Cardiac septum (tissue), 1 donor: ENCODE measurements at regions of chr16 and their contacts with region 1.

Region 1: GRCh38 chr16:87278191-87279095 is 38.7 kb downstream of the C16orf95 start:
- DNase-seq: no peak

Region 2: GRCh38 chr16:86563489-86564345 is 714.7 kb before region 1 on chr16:
- intact Hi-C with region 1: loop called (anchors 2 kb)
- DNase-seq: peak; percentile 92